Ascending aorta (tissue), 2 donors: ENCODE measurements at regions of chr3 and their contacts with region 1.

Region 1: GRCh38 chr3:102124301-102125158 is 275.2 kb downstream of the NFKBIZ start:
- DNase-seq: no peak
- H3K4me3 ChIP-seq: no peak overlapping the region
- H3K27ac ChIP-seq: peak overlapping the region; percentile 41 to 60
- H3K4me1 ChIP-seq: peaks cover under 1 to 31% of the 10 kb centered on the region in 2 donors
- H3K27me3 ChIP-seq: no peaks in the 10 kb centered on the region
- CTCF ChIP-seq: no peak

Region 2: DNA sequence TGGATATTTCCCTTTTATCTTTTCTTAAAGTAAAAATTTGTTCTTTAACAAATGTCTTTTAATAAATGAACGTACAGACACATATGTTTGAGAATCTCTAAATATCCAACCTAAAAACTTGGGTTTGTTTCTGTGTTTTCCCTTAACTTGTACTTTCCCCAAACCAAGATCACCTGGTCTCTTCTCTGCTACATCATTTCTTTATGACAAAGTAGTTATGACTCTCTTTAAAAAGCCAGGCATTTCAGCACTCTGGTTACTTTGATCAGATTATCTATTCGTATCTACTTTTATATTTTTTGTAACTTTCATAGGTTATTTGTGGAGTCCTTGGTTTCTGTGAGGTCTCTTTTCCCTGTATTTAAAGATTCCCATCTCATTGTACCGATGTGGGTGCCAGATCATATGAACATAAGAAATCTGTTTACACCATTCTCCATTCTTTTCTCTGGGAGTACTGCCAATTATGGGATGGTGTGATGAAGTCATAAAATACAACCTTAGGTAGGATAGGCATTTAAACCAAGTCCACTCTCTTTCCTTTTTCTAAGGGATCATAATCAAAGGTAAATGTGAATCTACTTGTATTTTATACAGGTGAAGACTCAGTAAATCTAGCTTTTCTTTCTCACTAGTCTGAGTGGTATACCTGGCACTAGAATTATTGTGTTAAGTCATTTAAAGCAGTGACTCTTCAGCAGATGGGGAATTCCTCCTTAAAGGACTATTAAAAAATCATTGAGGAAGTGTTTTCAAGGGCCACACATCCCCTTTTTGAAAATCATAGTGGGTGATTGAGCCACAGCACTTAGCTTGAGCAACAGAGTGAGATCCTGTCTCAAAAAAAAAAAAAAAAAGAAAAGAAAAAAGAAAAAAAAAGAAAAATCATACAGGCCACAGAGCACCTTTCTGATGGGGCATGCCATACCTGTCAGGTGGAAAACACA is 287.6 kb before region 1 on chr3:
- intact Hi-C with region 1: no loop called
- DNase-seq: no peak
- H3K4me3 ChIP-seq: no peak overlapping the region
- H3K27ac ChIP-seq: no peak overlapping the region
- H3K4me1 ChIP-seq: no peaks in the 10 kb centered on the region
- H3K27me3 ChIP-seq: no peaks in the 10 kb centered on the region
- CTCF ChIP-seq: no peak

Region 3: GRCh38 chr3:102156426-102156825 is 31.9 kb after region 1 on chr3:
- intact Hi-C with region 1: no loop called
- DNase-seq: peak in 1 of 2 donors; percentile 79
- H3K4me3 ChIP-seq: no peak overlapping the region
- H3K27ac ChIP-seq: peak overlapping the region; percentile 62 to 69
- H3K4me1 ChIP-seq: no peaks in the 10 kb centered on the region
- H3K27me3 ChIP-seq: no peaks in the 10 kb centered on the region
- CTCF ChIP-seq: no peak

Region 4: DNA sequence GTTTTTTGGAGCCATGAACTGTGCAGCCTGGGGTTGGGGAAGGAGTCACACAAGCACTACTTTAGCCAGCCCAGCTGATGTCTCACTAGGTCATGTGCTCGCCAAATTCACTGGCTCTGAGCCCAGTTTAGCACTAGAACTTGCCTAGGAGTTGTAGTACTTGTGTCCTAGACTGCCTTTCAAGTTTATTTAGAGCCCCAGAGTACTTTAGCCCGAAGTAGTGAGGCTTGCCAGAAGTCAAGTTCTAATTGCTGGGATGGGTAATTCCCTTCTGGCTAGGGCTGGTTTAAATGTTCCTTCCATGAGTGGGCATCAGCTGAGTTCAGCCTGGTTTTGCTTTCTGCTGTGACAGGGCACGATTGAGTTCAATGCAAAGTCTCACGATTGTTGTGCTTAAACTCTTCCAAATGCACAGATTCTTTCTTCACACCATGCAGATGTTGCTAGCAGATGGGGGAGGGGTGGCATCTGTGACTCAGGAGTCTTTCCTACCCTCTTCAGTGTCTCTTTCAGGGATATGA is 82.0 kb after region 1 on chr3:
- intact Hi-C with region 1: loop called (anchors 5 kb)
- DNase-seq: peak; percentile 60 to 90
- H3K4me3 ChIP-seq: peak overlapping the region in 1 of 2 donors; percentile 33
- H3K27ac ChIP-seq: peak overlapping the region; percentile 35 to 82
- H3K4me1 ChIP-seq: peaks cover 2 to 19% of the 10 kb centered on the region in 2 donors
- H3K27me3 ChIP-seq: no peaks in the 10 kb centered on the region
- CTCF ChIP-seq: no peak